HEK293 (cell line): ENCODE measurements at regions of chr1 and their contacts with region 1.

Region 1: GRCh38 chr1:156689035-156689952 is 12.1 kb upstream of the NES start:
- H3K4me3 ChIP-seq: peak overlapping the region; percentile 36
- H3K27ac ChIP-seq: no peak overlapping the region
- H3K4me1 ChIP-seq: peaks cover 16% of the 10 kb centered on the region
- CTCF ChIP-seq: peak; percentile 94

Region 2: GRCh38 chr1:156368889-156369684 is 320.2 kb before region 1 on chr1 and contains the start of gene RHBG:
- CTCF ChIA-PET with region 1: no interaction called
- POLR2A ChIA-PET with region 1: no interaction called
- H3K4me3 ChIP-seq: peak within 1 kb of the TSS; percentile 15
- H3K27ac ChIP-seq: no peak within 1 kb of the TSS
- H3K4me1 ChIP-seq: no peaks in the 10 kb centered on the region
- CTCF ChIP-seq: no peak

Region 3: DNA sequence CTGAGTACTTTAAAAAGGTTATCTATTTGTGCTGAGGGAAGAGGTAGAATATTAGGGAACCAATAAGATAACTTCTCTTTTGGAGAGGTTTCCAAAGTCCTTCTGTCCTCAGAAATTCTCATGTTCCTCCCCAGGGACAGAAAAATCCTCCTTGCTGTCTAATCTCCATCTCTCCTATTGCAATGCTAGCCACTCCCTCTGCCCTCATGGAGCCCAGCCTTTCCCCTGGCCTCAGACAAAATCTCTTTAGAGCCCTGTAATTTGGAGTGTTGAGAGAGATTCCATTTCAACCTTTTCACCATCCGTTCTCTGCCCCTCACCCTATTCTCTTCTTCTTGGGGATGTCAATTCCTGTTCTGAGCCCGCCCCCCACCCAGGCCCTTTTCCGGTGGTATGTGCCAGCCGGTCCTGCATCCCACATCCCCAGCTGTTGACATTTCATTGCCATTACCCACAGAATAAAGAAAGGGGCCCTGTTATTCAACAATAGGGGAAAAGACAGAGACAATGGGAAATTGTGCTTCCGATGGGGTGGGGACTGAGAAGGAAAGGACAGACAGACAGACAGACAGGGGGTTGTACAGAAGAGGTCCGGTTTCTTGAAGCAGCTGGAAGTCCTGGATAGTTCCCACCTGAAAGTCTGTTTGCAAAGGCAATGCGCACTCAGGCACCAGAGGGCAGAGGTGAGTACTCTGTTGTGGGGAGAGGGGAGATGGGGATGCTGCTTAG is 70.3 kb before region 1 on chr1 and contains the start of gene HAPLN2:
- CTCF ChIA-PET with region 1: interaction called, 235 read pairs
- POLR2A ChIA-PET with region 1: interaction called, 7 read pairs
- H3K4me3 ChIP-seq: no peak within 1 kb of the TSS
- H3K27ac ChIP-seq: no peak within 1 kb of the TSS
- H3K4me1 ChIP-seq: peaks cover 5% of the 10 kb centered on the region
- CTCF ChIP-seq: peak; percentile 54; the same call in 1 of the 2 replicates

Region 4: GRCh38 chr1:156677616-156678596 is 11.4 kb before region 1 on chr1:
- CTCF ChIA-PET with region 1: interaction called, 162 read pairs
- POLR2A ChIA-PET with region 1: interaction called, 4 read pairs
- H3K4me3 ChIP-seq: no peak overlapping the region
- H3K27ac ChIP-seq: no peak overlapping the region
- H3K4me1 ChIP-seq: no peaks in the 10 kb centered on the region
- CTCF ChIP-seq: peak; percentile 86; the same call in 1 of the 2 replicates

Region 5: DNA sequence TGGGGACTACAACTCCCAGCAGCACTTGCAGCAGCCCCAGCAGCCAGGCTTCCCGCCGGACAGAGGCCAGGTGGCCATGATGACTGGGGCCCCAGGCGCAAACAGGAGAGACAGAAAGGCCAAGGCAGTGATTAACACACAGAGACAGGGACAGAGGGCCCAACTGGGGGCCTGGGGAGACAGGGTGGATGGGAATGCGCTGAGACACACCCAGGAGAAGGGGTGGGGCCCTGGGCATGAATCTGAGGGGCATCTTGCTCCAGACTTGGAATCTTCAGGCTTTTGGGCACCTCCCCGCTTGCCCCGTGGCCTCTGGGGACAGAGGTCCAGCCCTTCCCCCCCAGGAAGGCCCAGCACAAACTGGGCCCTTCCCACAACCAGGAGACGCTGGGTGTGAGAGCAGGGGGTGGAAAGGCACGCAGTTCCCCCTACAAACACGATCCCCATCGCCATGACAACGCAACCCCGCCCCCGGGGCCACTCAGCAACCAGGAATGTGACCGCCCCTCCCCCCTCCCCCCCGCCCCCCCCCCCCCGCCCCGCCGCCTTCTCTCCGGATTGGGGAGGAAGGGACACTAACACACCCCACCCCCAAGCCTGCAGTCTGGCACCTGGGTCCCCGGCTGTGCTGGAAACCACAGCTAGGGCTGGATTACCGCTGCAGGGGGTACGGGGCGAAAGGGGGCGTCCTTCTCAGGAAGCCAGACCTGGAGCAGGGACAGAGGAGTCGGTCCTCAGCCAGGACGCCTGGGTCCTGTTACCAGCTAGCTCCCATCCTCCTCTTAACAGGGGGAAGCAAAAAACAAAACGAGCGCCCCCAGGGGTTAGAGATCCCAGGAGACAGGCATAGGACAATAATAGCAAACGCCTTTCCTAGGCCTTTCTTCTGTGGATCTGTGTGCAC is 57.7 kb after region 1 on chr1:
- CTCF ChIA-PET with region 1: interaction called, 10 read pairs
- POLR2A ChIA-PET with region 1: interaction called, 5 read pairs
- H3K4me3 ChIP-seq: peak overlapping the region; percentile 51
- H3K27ac ChIP-seq: peak overlapping the region; percentile 95
- H3K4me1 ChIP-seq: peaks cover 11% of the 10 kb centered on the region; the same call in 1 of the 2 replicates
- CTCF ChIP-seq: peak; percentile 66

Region 6: DNA sequence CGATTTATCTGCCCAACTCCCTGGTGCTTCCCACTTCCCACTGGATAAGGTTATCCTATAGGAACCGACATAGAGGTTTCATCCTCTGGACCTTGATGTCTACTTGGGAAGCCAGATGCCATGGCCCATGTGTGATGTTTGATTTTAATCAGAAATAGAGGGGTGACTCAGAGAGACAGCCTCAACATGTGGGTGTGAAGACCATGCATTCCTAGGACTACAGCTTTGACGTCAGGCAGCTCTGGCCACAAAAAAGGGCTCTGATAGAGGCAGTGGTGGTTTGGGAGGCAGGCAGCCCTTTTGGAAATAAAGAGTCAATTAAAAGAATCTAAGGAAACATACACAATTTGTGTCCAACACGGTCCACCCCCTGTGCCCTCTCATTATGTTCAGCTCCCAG is 132.5 kb after region 1 on chr1:
- CTCF ChIA-PET with region 1: interaction called, 13 read pairs
- POLR2A ChIA-PET with region 1: no interaction called
- H3K4me3 ChIP-seq: no peak overlapping the region
- H3K27ac ChIP-seq: no peak overlapping the region
- H3K4me1 ChIP-seq: no peaks in the 10 kb centered on the region
- CTCF ChIP-seq: no peak

Region 7: GRCh38 chr1:156892190-156893047 is 203.1 kb after region 1 on chr1:
- CTCF ChIA-PET with region 1: interaction called, 136 read pairs
- POLR2A ChIA-PET with region 1: no interaction called
- H3K4me3 ChIP-seq: no peak overlapping the region
- H3K27ac ChIP-seq: no peak overlapping the region
- H3K4me1 ChIP-seq: no peaks in the 10 kb centered on the region
- CTCF ChIP-seq: peak; percentile 86